ENCODE measurements at regions of chr3 and their contacts with region 1.

Region 1: GRCh38 chr3:29537889-29538609 is 257.2 kb downstream of the RBMS3 start:
- DNase-seq: no peak
- ATAC-seq: peak in 4 of 8 donors; percentile 16 to 47 (median 31)
- H3K4me3 ChIP-seq: no peak overlapping the region
- H3K27ac ChIP-seq: peak overlapping the region in 6 of 10 donors; percentile 2 to 35 (median 16)
- H3K4me1 ChIP-seq: peaks cover 5 to 57% (median 23%) of the 10 kb centered on the region in 9 donors
- H3K27me3 ChIP-seq: no peaks in the 10 kb centered on the region
- CTCF ChIP-seq: no peak

Region 2: DNA sequence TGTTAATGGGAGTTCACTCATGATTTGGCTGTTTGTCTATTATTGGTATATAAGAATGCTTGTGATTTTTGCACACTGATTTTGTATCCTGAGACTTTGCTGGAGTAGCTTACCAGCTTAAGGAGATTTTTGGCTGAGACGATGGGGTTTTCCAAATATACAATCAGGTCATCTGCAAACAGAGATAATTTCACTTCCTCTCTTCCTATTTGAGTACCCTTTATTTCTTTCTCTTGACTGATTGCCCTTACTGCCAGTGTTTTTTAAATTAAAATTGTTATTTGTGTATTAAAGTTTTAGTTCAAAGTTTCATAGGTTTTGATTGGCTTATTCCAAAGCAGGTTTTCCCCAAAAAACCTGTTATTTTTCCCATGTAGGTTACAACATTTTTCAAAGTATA is 647.7 kb before region 1 on chr3:
- intact Hi-C with region 1: no loop called
- DNase-seq: no peak
- ATAC-seq: no peak
- H3K4me3 ChIP-seq: no peak overlapping the region
- H3K27ac ChIP-seq: no peak overlapping the region
- H3K4me1 ChIP-seq: no peaks in the 10 kb centered on the region
- H3K27me3 ChIP-seq: no peaks in the 10 kb centered on the region
- CTCF ChIP-seq: no peak

Region 3: DNA sequence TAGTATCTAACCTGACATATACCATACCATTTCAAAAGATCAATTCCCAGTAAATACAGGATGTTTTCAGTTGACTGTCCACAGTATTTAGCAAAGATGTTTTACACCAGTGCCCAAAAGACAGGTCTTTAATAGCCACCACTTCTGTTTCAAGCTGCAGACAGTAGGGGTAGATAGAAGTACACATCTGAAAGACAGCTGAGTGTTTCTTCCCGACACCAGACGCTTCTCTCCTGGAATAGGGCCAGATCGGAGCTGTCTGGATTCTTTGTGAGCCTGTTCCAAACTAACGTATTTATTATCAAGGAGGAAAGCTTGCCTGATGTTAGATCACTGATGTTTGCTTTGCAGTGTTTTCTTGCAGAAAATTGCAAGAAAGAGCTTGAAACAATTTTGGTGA is 393.2 kb before region 1 on chr3:
- intact Hi-C with region 1: loop called in 1 of 10 experiments (anchors 10 kb)
- DNase-seq: peak; percentile 10 to 62
- ATAC-seq: peak in 7 of 8 donors; percentile 68 to 85 (median 75)
- H3K4me3 ChIP-seq: no peak overlapping the region
- H3K27ac ChIP-seq: no peak overlapping the region
- H3K4me1 ChIP-seq: peaks cover 0 to 32% (median 19%) of the 10 kb centered on the region in 9 donors
- H3K27me3 ChIP-seq: no peaks in the 10 kb centered on the region
- CTCF ChIP-seq: peak in 8 of 9 donors; percentile 10 to 66 (median 43)

Region 4: GRCh38 chr3:29693863-29694262 is 155.8 kb after region 1 on chr3:
- intact Hi-C with region 1: loop called in 1 of 10 experiments (anchors 10 kb)
- DNase-seq: no peak
- ATAC-seq: peak in 3 of 8 donors; percentile 47 to 53 (median 51)
- H3K4me3 ChIP-seq: no peak overlapping the region
- H3K27ac ChIP-seq: peak overlapping the region in 7 of 10 donors; percentile 53 to 89 (median 74)
- H3K4me1 ChIP-seq: peaks cover 3 to 47% (median 42%) of the 10 kb centered on the region in 9 donors
- H3K27me3 ChIP-seq: no peaks in the 10 kb centered on the region
- CTCF ChIP-seq: no peak

Region 5: DNA sequence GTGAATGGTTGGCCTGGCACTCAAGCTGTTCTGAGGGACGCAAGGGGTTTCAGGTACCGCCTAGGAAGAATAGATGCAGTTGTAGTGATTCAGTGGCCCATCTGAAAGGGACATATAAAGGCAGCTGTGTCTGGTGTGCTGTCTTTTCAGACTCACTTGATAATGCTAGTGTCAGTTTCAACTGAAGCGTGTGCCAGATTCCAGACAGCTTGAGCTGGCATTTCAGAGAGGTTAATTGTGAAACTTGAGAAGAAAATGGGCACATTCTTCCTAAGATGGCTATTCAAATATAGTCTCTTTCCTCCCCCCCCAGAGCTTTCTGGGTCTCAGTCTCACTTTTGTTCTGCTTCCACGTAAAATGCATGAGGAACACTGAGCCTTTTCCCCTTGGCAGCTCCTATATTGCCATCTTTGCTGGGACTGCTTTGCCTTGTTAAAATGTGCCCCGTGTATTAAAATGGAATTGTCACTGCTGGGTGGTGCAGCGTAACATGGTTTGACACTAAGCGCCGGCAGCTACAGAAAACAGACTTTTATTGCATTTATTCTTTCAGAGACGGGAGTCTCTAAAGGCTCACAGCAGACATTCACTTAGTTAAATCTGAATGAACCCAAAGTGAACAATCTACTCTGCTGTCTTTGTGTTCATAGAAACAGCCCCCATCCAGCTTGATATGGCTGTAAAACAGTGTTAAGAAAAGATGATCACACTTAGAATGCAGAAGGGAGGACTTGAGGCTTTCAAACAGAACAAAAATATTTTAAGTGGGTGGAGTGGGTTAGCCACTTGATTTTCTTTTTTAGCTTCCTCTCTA is 221.6 kb after region 1 on chr3:
- intact Hi-C with region 1: loop called in 3 of 10 experiments (anchors 10 kb)
- DNase-seq: peak in 1 of 2 donors; percentile 9
- ATAC-seq: peak in 7 of 8 donors; percentile 44 to 75 (median 57)
- H3K4me3 ChIP-seq: peak overlapping the region in 2 of 10 donors; percentile 9 to 11
- H3K27ac ChIP-seq: peak overlapping the region; percentile 4 to 88 (median 78)
- H3K4me1 ChIP-seq: peaks cover 11 to 67% (median 57%) of the 10 kb centered on the region in 9 donors
- H3K27me3 ChIP-seq: no peaks in the 10 kb centered on the region
- CTCF ChIP-seq: no peak

Measured in heart right ventricle (tissue), 16 donors.